ENCODE measurements at regions of chr10 and their contacts with region 1.

Region 1: DNA sequence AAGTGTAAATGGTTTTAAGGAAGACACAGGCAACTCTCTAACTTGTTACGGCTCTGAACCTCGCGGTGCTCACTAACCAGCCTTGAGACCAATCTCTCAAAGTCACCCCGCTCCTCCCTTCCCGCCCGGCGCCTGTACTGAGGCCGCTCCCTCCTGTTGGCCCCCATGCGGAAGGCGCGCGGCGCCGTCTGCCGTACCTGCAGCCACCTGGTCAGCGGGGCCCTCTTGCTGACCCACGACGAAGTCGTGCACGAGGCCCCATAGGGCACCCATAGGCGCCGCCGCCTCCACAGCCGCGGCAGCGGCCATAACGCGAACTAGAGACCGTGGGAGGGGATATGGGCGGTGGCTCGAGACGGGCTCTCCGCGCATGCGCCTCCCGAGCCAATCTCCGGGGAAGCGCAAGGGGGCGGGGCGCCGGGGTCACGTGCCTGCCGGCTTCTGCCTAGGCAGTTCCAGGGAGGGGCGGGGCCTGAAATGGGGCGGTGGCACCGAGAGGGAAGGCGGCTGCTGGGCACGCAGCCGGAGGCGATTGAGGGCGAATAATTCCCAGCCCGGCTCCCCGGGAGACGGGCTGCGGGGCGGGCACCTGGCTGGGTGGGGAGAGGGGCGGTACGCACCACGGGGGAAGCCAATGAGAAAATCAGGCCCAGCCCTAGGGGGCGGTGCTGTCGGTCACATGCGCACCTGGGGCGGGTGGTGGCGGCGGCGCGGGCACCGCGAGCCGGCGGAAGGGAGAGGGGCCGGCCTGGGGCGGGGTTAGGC is at the start of gene MMS19:
- DNase-seq: peak; percentile 100
- ATAC-seq: peak; percentile 87
- H3K4me3 Mint-ChIP-seq: peak within 1 kb of the TSS; percentile 96
- H3K27ac Mint-ChIP-seq: peak within 1 kb of the TSS; percentile 96
- H3K4me1 Mint-ChIP-seq: peaks cover 35% of the 10 kb centered on the region
- H3K27me3 Mint-ChIP-seq: peaks cover 30% of the 10 kb centered on the region
- CTCF ChIP-seq: no peak
- total RNA-seq, gene MMS19: 83.0 and 89.2 TPM in 2 replicates

Region 2: DNA sequence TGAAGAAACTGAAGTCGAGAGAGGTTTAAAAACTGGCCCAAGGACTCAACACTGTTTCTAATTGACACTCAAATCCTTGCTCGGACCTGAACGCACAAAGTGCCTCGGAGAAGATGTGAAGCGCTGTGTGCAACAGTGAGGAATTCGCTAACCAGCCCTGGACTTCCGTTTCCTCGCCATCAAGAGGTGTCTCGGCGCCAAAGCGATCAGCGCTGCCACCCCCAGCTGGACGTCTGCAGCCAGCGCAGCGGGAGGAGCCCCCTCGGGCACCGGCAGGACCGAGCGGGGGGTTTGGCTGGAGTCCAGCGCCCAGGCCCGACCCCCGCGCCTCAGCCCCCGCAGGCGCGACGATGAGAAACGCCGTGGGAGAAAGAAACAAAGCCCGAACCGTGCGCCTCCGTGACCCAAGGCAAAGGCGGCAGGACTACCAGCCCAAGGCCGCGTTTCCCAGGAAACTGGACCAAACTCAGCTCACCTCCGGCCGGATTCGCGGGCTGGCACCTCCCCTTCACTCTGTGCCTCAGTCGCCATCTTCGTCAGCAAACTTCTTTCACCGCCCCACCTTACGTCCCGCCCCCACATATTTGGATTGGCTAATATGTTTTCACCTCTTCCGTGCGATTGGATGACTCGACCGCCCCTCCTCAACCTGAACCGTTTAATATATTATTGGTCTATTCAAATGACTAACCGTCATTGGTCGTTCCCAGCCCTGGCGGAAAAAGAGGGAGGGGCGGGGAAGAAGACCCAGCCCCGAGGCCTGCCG is 206.0 kb before region 1 on chr10 and contains the start of gene ARHGAP19:
- CTCF ChIA-PET with region 1: no interaction called
- POLR2A ChIA-PET with region 1: no interaction called
- intact Hi-C with region 1: loop called (anchors 1 kb)
- DNase-seq: peak; percentile 73
- ATAC-seq: peak; percentile 98
- H3K4me3 Mint-ChIP-seq: peak within 1 kb of the TSS; percentile 92
- H3K27ac Mint-ChIP-seq: peak within 1 kb of the TSS; percentile 85
- H3K4me1 Mint-ChIP-seq: peaks cover 19% of the 10 kb centered on the region
- H3K27me3 Mint-ChIP-seq: peaks cover 1% of the 10 kb centered on the region
- CTCF ChIP-seq: no peak
- total RNA-seq, gene ARHGAP19: 14.7 and 17.8 TPM in 2 replicates

Region 3: GRCh38 chr10:97425964-97426775 is 72.1 kb before region 1 on chr10 and contains the start of gene PGAM1:
- CTCF ChIA-PET with region 1: no interaction called
- POLR2A ChIA-PET with region 1: no interaction called
- intact Hi-C with region 1: loop called (anchors 1 kb)
- DNase-seq: peak; percentile 97
- ATAC-seq: peak; percentile 88
- H3K4me3 Mint-ChIP-seq: peak within 1 kb of the TSS; percentile 92
- H3K27ac Mint-ChIP-seq: peak within 1 kb of the TSS; percentile 94
- H3K4me1 Mint-ChIP-seq: peaks cover 43% of the 10 kb centered on the region
- H3K27me3 Mint-ChIP-seq: no peaks in the 10 kb centered on the region
- CTCF ChIP-seq: no peak
- total RNA-seq, gene PGAM1: 162 and 166 TPM in 2 replicates

Region 4: GRCh38 chr10:97508342-97508741 is 10.1 kb after region 1 on chr10:
- CTCF ChIA-PET with region 1: no interaction called
- POLR2A ChIA-PET with region 1: no interaction called
- intact Hi-C with region 1: no loop called
- DNase-seq: no peak
- ATAC-seq: no peak
- H3K4me3 Mint-ChIP-seq: no peak overlapping the region
- H3K27ac Mint-ChIP-seq: no peak overlapping the region
- H3K4me1 Mint-ChIP-seq: peaks cover 8% of the 10 kb centered on the region
- H3K27me3 Mint-ChIP-seq: peaks cover 7% of the 10 kb centered on the region
- CTCF ChIP-seq: no peak

Region 5: GRCh38 chr10:97632949-97633884 is 135.0 kb after region 1 on chr10 and contains the start of gene MORN4:
- CTCF ChIA-PET with region 1: no interaction called
- POLR2A ChIA-PET with region 1: interaction called, 3 read pairs
- intact Hi-C with region 1: loop called (anchors 2 kb)
- DNase-seq: peak; percentile 84
- ATAC-seq: peak; percentile 99
- H3K4me3 Mint-ChIP-seq: peak within 1 kb of the TSS; percentile 100
- H3K27ac Mint-ChIP-seq: peak within 1 kb of the TSS; percentile 83
- H3K4me1 Mint-ChIP-seq: peaks cover 16% of the 10 kb centered on the region
- H3K27me3 Mint-ChIP-seq: no peaks in the 10 kb centered on the region
- CTCF ChIP-seq: no peak
- total RNA-seq, gene MORN4: 1.5 and 2.9 TPM in 2 replicates

Region 6: GRCh38 chr10:97736902-97737769 is 238.9 kb after region 1 on chr10 and contains the start of gene ZFYVE27:
- CTCF ChIA-PET with region 1: no interaction called
- POLR2A ChIA-PET with region 1: interaction called, 3 read pairs
- intact Hi-C with region 1: loop called (anchors 10 kb)
- DNase-seq: peak; percentile 94
- ATAC-seq: peak; percentile 90
- H3K4me3 Mint-ChIP-seq: peak within 1 kb of the TSS; percentile 97
- H3K27ac Mint-ChIP-seq: peak within 1 kb of the TSS; percentile 97
- H3K4me1 Mint-ChIP-seq: peaks cover 47% of the 10 kb centered on the region
- H3K27me3 Mint-ChIP-seq: no peaks in the 10 kb centered on the region
- CTCF ChIP-seq: no peak
- total RNA-seq, gene ZFYVE27: 45.3 and 65.7 TPM in 2 replicates

Measured in activated B cell treated with CpG ODN at 0.5 μM for 24 hours (primary cell).